AG04450 (cell line): ENCODE measurements at regions of chr3 and their contacts with region 1.

Region 1: GRCh38 chr3:187164885-187165543 is 25.7 kb upstream of the RPL39L start:
- DNase-seq: no peak
- H3K4me3 ChIP-seq: no peak overlapping the region
- H3K27ac ChIP-seq: no peak overlapping the region
- H3K27me3 ChIP-seq: peaks cover 20% of the 10 kb centered on the region
- CTCF ChIP-seq: peak; percentile 67

Region 2: DNA sequence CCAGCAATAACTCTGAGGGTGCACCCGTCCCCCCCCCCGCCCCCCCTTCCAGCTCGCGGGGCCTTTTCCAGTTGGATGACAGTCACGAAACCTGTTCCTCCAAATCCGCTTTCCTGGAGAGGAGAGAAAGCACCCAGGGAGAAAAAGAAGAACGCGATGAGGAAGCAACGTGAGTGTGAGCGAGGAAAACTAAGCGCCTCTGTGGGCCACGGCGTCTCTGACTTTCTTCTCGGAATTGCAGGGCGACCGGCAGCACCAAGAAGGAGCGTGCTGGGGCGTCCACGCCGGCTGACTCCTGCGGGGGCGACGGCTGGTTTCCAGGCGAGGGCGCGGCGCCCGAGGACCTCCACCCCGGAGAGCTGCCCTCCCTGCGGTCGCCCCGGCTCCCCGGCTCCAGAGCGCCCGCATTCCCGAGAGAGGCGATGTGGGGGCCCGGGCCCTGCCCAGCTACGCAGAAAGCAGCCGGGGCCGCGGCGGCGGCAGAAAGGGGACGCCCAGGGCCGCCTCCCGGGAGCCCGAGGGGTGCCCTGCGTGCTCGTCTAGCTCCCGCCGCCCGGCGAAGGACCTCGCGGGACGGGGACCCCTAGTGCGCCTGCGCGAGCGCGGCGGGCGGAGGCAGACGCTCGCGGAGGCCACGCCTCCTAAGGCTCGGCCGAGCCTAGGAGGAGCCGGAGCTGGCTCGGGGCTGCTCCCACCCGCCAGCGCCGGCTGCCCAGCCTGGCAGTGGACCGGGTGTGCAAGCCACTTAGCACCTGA is 337.9 kb before region 1 on chr3:
- CTCF ChIA-PET with region 1: interaction called, 15 read pairs
- POLR2A ChIA-PET with region 1: interaction called, 4 read pairs
- DNase-seq: peak; percentile 39
- H3K4me3 ChIP-seq: peak overlapping the region; percentile 62
- H3K27ac ChIP-seq: no peak overlapping the region
- H3K27me3 ChIP-seq: peaks cover 34% of the 10 kb centered on the region
- CTCF ChIP-seq: no peak

Region 3: DNA sequence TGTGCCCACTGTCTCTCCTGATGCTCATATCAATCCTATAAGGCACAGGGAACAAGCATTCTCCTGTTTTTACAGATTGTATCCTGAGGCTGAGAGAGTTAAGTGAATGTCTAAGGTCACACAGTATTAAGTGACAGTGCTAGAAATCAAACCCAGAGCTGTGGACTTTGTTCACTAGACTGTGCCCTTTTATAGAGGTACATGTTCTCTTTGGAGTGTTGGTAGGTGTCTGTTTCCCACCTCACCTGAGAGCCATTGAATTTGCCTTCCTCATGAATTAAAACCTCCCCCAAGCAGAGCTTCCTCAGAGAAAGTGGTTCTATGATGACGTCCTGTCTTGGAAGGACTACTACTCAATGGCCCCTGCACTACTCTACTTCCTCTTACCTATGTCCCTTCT is 310.1 kb before region 1 on chr3:
- CTCF ChIA-PET with region 1: interaction called, 157 read pairs
- POLR2A ChIA-PET with region 1: no interaction called
- DNase-seq: no peak
- H3K4me3 ChIP-seq: no peak overlapping the region
- H3K27ac ChIP-seq: no peak overlapping the region
- H3K27me3 ChIP-seq: peaks cover 6% of the 10 kb centered on the region
- CTCF ChIP-seq: no peak

Region 4: GRCh38 chr3:187130346-187131066 is 34.5 kb before region 1 on chr3:
- CTCF ChIA-PET with region 1: interaction called, 12 read pairs
- POLR2A ChIA-PET with region 1: no interaction called
- DNase-seq: peak; percentile 10
- H3K4me3 ChIP-seq: no peak overlapping the region
- H3K27ac ChIP-seq: no peak overlapping the region
- H3K27me3 ChIP-seq: no peaks in the 10 kb centered on the region
- CTCF ChIP-seq: no peak

Region 5: DNA sequence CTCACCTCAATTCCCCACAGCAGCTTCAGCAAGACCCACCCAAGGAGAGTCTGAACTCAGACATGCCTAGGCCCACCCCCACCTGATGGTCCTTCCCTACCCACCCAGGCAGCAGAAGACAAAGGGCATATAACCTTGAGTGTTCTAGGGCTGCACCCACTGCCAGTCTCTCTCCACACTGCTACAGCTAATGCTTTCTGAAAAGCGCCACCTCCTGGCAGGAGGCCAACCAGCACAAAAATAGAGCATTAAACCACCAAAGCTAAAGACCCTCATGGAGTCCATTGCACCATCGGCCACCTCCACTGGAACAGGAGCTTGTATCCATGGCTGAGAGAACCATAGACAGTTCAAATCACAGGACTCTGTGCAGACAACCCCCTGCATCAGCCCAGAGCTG is 14.4 kb before region 1 on chr3:
- CTCF ChIA-PET with region 1: interaction called, 19 read pairs
- POLR2A ChIA-PET with region 1: no interaction called
- DNase-seq: no peak
- H3K4me3 ChIP-seq: no peak overlapping the region
- H3K27ac ChIP-seq: no peak overlapping the region
- H3K27me3 ChIP-seq: peaks cover 19% of the 10 kb centered on the region
- CTCF ChIP-seq: no peak

Region 6: GRCh38 chr3:187377842-187378241 is 212.8 kb after region 1 on chr3:
- CTCF ChIA-PET with region 1: no interaction called
- POLR2A ChIA-PET with region 1: no interaction called
- DNase-seq: no peak
- H3K4me3 ChIP-seq: no peak overlapping the region
- H3K27ac ChIP-seq: no peak overlapping the region
- H3K27me3 ChIP-seq: peaks cover 4% of the 10 kb centered on the region
- CTCF ChIP-seq: no peak